HepG2 (cell line): ENCODE measurements at regions of chr1 and their contacts with region 1.

Region 1: DNA sequence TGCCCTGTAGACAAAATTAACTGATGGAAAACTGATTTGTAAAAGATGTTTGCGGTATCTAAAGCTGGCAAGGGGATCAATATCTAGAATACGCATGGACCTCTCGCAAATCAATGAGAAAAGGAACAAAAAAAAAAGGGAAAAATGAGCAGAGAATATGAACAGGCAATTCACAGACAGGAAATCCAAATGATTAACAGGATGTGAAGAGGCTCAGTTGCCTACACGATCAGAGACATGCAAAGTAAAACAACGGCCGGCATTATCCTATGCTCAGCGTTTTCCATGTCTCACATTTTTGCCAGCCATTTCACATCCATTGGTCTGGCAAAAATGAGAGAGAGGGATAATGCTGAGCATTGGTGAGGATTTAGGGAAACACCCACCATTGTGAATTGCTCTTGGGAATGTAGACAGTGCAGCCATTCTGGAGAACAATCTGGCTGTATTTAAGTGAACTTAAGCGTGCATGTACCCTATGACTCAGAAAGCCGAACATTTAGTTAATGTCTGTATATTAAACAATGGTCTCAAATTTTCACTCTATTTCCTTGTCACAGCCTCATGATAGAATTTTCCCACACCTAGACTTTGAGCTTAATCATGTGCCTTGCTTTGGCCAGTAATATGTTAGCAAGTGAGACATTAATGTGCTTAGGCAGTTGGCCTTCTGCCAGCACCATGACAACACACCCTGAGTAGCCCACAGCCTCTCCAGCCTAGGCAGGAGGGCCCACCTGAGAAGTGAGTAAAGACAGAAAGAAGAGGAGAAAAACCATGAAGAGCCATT is 61.0 kb upstream of the NBPF3 start:
- DNase-seq: no peak
- ATAC-seq: no peak
- H3K4me3 ChIP-seq: no peak overlapping the region
- H3K27ac ChIP-seq: no peak overlapping the region
- H3K4me1 ChIP-seq: no peaks in the 10 kb centered on the region
- H3K27me3 ChIP-seq: no peaks in the 10 kb centered on the region; a peak in 1 of 5 replicates
- CTCF ChIP-seq: no peak
- EP300 ChIP-seq: no peak
- POLR2A ChIP-seq: no peak
- RAD21 ChIP-seq: no peak

Region 2: GRCh38 chr1:21302747-21303715 is 75.9 kb before region 1 on chr1:
- CTCF ChIA-PET with region 1: no interaction called
- POLR2A ChIA-PET with region 1: no interaction called
- in situ Hi-C with region 1: no loop called
- intact Hi-C with region 1: no loop called
- DNase-seq: no peak
- ATAC-seq: peak; percentile 78
- H3K4me3 ChIP-seq: no peak overlapping the region
- H3K27ac ChIP-seq: no peak overlapping the region
- H3K4me1 ChIP-seq: no peaks in the 10 kb centered on the region
- H3K27me3 ChIP-seq: no peaks in the 10 kb centered on the region
- CTCF ChIP-seq: peak; percentile 65
- EP300 ChIP-seq: no peak
- POLR2A ChIP-seq: no peak
- RAD21 ChIP-seq: peak; percentile 72

Region 3: GRCh38 chr1:21573971-21574465 is 195.1 kb after region 1 on chr1:
- CTCF ChIA-PET with region 1: no interaction called
- POLR2A ChIA-PET with region 1: no interaction called
- in situ Hi-C with region 1: loop called (anchors 10 kb)
- intact Hi-C with region 1: loop called (anchors 5 kb)
- DNase-seq: peak; percentile 67
- ATAC-seq: peak; percentile 81
- H3K4me3 ChIP-seq: no peak overlapping the region
- H3K27ac ChIP-seq: no peak overlapping the region
- H3K4me1 ChIP-seq: peaks cover 17% of the 10 kb centered on the region
- H3K27me3 ChIP-seq: peaks cover 2 to 35% of the 10 kb centered on the region in 2 experiments
- CTCF ChIP-seq: peak; percentile 85
- EP300 ChIP-seq: no peak
- POLR2A ChIP-seq: no peak
- RAD21 ChIP-seq: peak; percentile 81